Right lobe of liver (tissue), 6 donors: ENCODE measurements at regions of chr2 and their contacts with region 1.

Region 1: DNA sequence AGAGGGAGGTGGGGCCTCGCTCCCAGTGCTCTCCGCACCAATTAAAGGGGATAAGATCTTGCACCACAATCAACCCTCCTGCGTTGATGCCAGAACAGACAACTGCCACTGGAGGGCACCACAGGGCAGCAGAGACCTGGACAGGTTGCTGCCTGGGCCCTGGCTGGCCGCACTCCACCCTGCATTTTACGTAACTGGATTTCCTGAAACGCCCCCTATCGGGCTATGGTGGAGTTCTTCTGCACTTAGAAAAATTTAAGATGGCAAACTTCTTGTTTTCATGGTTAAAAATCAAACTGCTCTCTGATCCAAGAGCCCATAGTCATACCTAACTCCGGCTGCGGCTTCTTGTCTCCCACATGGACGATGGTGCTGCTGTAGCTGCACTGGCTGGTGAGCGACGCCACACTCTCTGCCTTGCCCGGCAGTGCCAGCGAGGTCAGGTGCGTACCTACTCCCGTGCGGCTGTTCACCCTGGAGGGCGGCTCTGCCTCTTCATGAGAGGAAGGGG is 16.8 kb upstream of the HES6 start:
- DNase-seq: peak; percentile 89 to 94 (median 92)
- ATAC-seq: peak; percentile 93 to 97 (median 95)
- H3K4me3 ChIP-seq: no peak overlapping the region
- H3K27ac ChIP-seq: peak overlapping the region in 2 of 3 donors; percentile 32 to 64
- H3K4me1 ChIP-seq: peaks cover 0 to 7% (median 0%) of the 10 kb centered on the region in 4 donors
- H3K27me3 ChIP-seq: no peaks in the 10 kb centered on the region
- CTCF ChIP-seq: peak; percentile 93 to 99 (median 98)
- POLR2A ChIP-seq: no peak

Region 2: GRCh38 chr2:238339395-238340213 is 83.0 kb after region 1 on chr2:
- intact Hi-C with region 1: loop called (anchors 5 kb)
- DNase-seq: no peak
- ATAC-seq: peak; percentile 92 to 95 (median 94)
- H3K4me3 ChIP-seq: no peak overlapping the region
- H3K27ac ChIP-seq: no peak overlapping the region
- H3K4me1 ChIP-seq: peaks cover 0 to 6% (median 0%) of the 10 kb centered on the region in 4 donors
- H3K27me3 ChIP-seq: no peaks in the 10 kb centered on the region
- CTCF ChIP-seq: peak; percentile 42 to 66 (median 53)
- POLR2A ChIP-seq: no peak

Region 3: GRCh38 chr2:238346544-238346943 is 89.9 kb after region 1 on chr2:
- intact Hi-C with region 1: loop called in 1 of 2 experiments (anchors 5 kb)
- DNase-seq: no peak
- ATAC-seq: no peak
- H3K4me3 ChIP-seq: no peak overlapping the region
- H3K27ac ChIP-seq: no peak overlapping the region
- H3K4me1 ChIP-seq: no peaks in the 10 kb centered on the region
- H3K27me3 ChIP-seq: no peaks in the 10 kb centered on the region
- CTCF ChIP-seq: no peak
- POLR2A ChIP-seq: no peak